Activated CD4-positive, alpha-beta T cell treated with anti-CD3 and anti-CD28 coated beads for 36 hours (primary cell): ENCODE measurements at regions of chr6 and their contacts with region 1.

Region 1: DNA sequence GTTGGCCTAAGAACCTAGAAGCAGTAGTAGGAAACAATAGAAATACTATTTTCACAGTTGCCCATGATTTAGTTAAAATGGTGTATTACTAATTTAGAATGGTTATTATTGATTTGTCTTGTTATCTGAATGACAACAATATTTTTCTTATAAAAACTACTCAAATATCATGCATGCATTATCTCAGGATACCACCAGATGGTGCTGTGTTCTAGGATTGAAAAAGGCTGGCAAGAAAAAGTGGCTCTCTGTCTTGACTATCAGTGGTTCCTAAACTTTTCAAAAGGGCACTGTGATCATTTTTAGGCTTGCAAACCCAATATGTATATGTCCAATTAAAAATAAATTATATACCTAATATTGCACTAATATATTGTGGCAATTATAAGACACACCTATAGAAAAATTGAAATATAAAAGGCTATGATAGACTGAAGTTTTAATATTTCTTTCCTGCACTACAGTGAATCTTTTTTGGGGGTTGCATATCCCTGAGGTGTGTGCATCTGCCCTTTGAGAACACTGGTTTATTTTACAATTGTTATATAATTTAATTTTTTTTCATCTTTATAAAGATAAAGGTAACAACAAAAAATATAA is 131.7 kb upstream of the MLIP start:
- DNase-seq: peak; percentile 8
- ATAC-seq: no peak
- H3K4me3 Mint-ChIP-seq: no peak overlapping the region
- H3K27ac Mint-ChIP-seq: no peak overlapping the region
- H3K4me1 Mint-ChIP-seq: no peaks in the 10 kb centered on the region
- H3K27me3 Mint-ChIP-seq: peaks cover 6% of the 10 kb centered on the region

Region 2: DNA sequence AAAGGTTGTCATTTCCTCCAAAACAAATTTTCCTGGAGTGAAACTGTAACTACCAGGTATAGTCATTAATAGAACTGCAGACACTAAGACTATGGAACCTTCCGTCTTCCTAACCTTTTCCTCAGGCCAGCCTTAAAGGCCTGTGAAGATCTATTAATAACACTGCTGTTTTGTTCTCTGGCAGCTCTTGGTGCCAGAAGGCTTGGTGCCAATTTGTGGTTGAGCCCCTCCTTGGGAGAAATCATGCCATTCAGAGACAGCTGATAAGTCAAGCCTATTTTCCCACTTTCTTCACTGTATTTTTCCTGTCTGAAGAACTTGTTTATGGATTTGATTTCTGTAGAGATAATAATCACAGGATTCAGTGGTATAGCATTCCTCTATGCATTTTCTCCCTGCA is 1259.5 kb after region 1 on chr6:
- CTCF ChIA-PET with region 1: no interaction called
- POLR2A ChIA-PET with region 1: no interaction called
- intact Hi-C with region 1: loop called in 1 of 2 experiments (anchors 5 kb)
- DNase-seq: no peak
- ATAC-seq: no peak
- H3K4me3 Mint-ChIP-seq: no peak overlapping the region
- H3K27ac Mint-ChIP-seq: no peak overlapping the region
- H3K4me1 Mint-ChIP-seq: no peaks in the 10 kb centered on the region
- H3K27me3 Mint-ChIP-seq: no peaks in the 10 kb centered on the region